Right cardiac atrium (tissue), 5 donors: ENCODE measurements at regions of chr10 and their contacts with region 1.

Region 1: GRCh38 chr10:44995914-44996636 is 4.6 kb upstream of the ZNF22 start:
- DNase-seq: peak; percentile 62 to 87 (median 82)
- ATAC-seq: peak; percentile 66 to 72
- H3K4me3 ChIP-seq: no peak overlapping the region
- H3K27ac ChIP-seq: peak overlapping the region; percentile 99
- H3K4me1 ChIP-seq: peaks cover 34% of the 10 kb centered on the region
- H3K27me3 ChIP-seq: no peaks in the 10 kb centered on the region

Region 2: GRCh38 chr10:44809652-44810051 is 186.4 kb before region 1 on chr10:
- intact Hi-C with region 1: no loop called
- DNase-seq: no peak
- ATAC-seq: no peak
- H3K4me3 ChIP-seq: no peak overlapping the region
- H3K27ac ChIP-seq: no peak overlapping the region
- H3K4me1 ChIP-seq: peaks cover 6% of the 10 kb centered on the region
- H3K27me3 ChIP-seq: no peaks in the 10 kb centered on the region

Region 3: DNA sequence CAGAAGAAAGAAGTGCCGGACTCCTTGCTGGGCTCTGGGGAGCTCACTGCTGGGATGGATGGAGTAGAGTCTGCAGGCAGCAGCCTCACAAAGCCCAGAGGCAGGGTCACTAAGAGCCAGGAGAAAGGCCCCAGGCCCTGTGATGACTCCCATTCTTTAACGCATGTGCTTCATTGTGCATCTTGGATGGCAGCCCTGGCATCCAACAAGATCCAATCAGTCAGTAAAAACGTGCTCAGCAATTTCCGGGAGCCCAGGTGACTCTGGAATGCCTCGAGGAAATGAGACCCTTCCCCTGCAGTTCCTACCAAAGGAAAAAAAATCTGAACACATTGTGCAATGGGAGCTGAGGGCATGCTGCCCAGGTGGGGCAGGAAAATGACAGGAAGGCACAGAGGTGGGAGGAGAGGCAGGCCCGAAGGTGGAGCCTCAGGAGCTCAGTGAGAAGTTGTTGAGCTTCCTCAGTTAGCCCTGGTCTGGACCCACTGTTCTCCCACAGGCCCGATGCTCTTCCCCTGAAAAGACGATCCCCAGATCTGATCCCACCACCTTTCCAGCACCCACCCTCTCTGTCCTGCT is 145.6 kb before region 1 on chr10:
- intact Hi-C with region 1: no loop called
- DNase-seq: no peak
- ATAC-seq: no peak
- H3K4me3 ChIP-seq: no peak overlapping the region
- H3K27ac ChIP-seq: no peak overlapping the region
- H3K4me1 ChIP-seq: no peaks in the 10 kb centered on the region
- H3K27me3 ChIP-seq: no peaks in the 10 kb centered on the region

Region 4: DNA sequence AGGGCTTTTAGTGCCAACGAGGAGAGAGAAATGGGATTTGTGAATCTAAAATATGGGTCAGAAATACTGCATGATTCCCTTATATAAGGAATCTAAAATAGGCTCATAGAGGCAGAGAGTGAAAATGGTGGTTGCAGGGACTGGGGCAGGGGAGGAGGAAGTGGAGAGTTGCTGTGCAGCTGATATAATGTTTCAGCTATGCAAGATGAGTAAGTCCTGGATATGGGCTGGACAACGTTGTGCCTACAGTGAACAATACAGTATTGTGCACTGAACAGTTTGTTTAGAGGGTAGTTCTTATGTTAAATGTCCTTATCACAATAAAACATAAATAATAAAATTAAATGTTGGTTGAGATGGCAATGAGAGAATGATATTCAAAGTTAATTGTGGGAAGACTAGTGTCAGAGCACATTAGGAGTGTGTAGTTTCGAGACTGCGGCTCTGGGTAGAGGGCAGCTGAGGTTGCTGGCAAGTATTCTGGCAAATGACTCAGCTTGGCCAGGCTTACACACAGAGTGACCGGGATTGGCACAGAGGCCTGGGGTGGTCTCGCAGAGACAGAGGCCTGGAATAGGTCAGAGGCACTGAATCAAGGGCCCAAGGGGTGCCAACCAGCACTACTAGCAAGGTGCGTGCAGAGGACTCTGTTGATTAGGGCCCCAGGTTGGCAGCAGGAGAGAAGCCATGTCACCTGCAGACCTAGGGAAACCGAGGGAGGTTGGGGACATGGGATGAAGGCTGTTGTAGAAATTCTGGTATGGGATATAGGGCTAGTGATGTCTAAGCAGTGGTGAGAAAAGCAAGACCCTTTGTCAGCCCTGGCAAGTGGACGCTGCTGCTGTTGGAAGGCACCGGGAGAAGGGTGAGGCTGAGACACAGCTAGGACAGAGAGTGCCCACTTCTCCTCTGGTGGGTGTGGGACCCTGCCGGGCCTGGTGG is 14.6 kb before region 1 on chr10:
- intact Hi-C with region 1: loop called in 1 of 4 experiments (anchors 2 kb)
- DNase-seq: peak; percentile 73 to 84 (median 81)
- ATAC-seq: peak; percentile 36 to 54
- H3K4me3 ChIP-seq: no peak overlapping the region
- H3K27ac ChIP-seq: peak overlapping the region; percentile 89
- H3K4me1 ChIP-seq: peaks cover 39% of the 10 kb centered on the region
- H3K27me3 ChIP-seq: no peaks in the 10 kb centered on the region